Right lobe of liver (tissue), 6 donors: ENCODE measurements at regions of chr19 and their contacts with region 1.

Region 1: GRCh38 chr19:18000935-18001778 is 6.8 kb upstream of the ARRDC2 start:
- DNase-seq: peak; percentile 79 to 93 (median 90)
- ATAC-seq: peak; percentile 71 to 82 (median 78)
- H3K4me3 ChIP-seq: peak overlapping the region; percentile 55 to 79 (median 55)
- H3K27ac ChIP-seq: peak overlapping the region; percentile 69 to 93 (median 84)
- H3K4me1 ChIP-seq: peaks cover 0 to 5% (median 1%) of the 10 kb centered on the region in 4 donors
- H3K27me3 ChIP-seq: no peaks in the 10 kb centered on the region
- CTCF ChIP-seq: no peak
- POLR2A ChIP-seq: peak; percentile 82

Region 2: DNA sequence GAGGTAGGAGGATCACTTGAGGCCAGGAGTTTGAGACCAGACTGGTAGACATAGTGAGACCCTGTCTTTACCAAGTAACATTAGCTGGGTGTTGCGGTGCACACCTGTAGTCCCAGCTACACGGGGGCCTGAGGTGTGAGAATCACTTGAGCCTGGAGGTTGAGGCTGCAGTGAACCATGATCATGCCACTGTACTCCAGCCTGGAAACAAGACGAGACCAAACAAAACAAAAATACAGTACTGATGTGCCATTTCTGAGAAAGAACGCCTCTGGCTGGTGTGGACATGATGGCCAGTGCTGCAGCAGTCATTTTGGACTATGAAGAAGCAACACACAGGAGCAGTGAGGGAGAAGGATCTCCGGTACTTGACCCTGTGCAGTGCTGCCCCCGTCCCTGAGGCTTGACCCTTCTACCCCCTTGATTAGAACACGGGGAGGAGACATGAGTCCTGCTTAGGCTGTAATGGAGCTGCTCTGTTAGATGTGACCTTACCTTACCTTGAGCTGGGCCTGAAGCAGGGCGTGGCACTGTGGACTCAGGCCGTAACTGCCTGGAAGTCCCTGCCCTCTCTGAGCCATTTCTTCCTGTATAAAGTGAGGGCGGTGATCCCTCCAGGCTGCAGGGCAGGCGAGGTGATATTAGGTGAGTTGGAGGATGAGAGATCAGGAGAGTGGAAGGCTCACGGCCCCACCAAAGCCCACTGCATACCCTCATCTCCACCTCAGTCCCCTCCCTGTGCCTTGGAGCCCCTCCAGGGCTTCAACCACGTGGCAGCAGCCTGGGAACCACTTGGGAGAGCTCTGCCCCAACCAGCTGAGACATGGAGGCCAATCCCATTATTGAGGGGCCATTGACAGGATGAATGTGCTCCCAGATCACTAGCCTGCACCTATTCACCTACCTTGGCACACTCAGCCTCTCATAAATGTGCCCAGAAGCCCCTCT is 135.5 kb before region 1 on chr19:
- intact Hi-C with region 1: loop called in 1 of 2 experiments (anchors 5 kb)
- DNase-seq: no peak
- ATAC-seq: peak; percentile 25 to 67 (median 26)
- H3K4me3 ChIP-seq: no peak overlapping the region
- H3K27ac ChIP-seq: no peak overlapping the region
- H3K4me1 ChIP-seq: peaks cover 0 to 12% (median 5%) of the 10 kb centered on the region in 4 donors
- H3K27me3 ChIP-seq: peaks cover 0 to 3% of the 10 kb centered on the region in 2 donors
- CTCF ChIP-seq: no peak
- POLR2A ChIP-seq: no peak

Region 3: GRCh38 chr19:17883627-17884410 is 117.3 kb before region 1 on chr19:
- intact Hi-C with region 1: no loop called
- DNase-seq: no peak
- ATAC-seq: peak in 1 of 4 donors; percentile 39
- H3K4me3 ChIP-seq: no peak overlapping the region
- H3K27ac ChIP-seq: no peak overlapping the region
- H3K4me1 ChIP-seq: no peaks in the 10 kb centered on the region
- H3K27me3 ChIP-seq: no peaks in the 10 kb centered on the region
- CTCF ChIP-seq: no peak
- POLR2A ChIP-seq: no peak

Region 4: DNA sequence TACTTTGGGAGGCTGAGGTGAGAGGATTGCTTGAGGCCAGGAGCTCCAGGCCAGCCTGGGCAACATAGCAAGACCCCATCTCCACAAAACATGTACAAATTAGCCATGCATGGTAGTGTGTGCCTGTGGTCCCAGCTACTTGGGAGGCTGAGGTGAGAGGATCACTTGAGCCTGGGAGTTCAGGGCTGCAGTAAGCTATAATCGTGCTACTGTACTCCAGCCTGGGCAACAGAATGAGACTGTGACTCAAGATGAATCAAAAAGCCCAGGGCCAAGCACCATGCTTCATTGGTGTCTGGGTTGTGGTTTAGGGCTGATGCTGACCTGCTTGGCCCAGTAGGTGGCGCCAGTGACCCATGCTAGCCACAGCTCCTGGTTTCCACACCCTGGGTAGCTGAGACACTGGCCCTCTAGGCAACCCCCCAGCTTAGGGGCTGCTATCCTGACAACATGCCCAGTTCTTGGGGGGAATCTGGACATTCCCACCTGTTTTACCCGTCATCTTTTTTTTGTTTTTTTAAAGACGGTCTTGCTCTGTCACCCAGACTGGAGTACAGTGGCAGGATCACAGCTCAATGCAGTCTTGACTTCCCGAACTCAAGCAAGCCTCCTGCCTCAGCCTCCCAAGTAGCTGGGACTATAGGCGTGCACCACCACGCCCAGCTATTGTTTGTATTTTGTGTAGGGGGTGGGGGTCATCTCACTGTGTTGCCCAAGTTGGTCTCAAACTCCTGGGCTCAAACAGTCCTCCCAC is 62.9 kb before region 1 on chr19:
- intact Hi-C with region 1: loop called in 1 of 2 experiments (anchors 2 kb)
- DNase-seq: peak; percentile 70 to 78 (median 77)
- ATAC-seq: peak; percentile 89 to 97 (median 90)
- H3K4me3 ChIP-seq: no peak overlapping the region
- H3K27ac ChIP-seq: no peak overlapping the region
- H3K4me1 ChIP-seq: peaks cover 0 to 8% (median 3%) of the 10 kb centered on the region in 4 donors
- H3K27me3 ChIP-seq: no peaks in the 10 kb centered on the region
- CTCF ChIP-seq: peak; percentile 87 to 95 (median 92)
- POLR2A ChIP-seq: no peak

Region 5: GRCh38 chr19:18063463-18063862 is 62.3 kb after region 1 on chr19:
- intact Hi-C with region 1: loop called (anchors 2 to 5 kb)
- DNase-seq: peak in 2 of 3 donors; percentile 40 to 67
- ATAC-seq: peak in 3 of 4 donors; percentile 56 to 73 (median 62)
- H3K4me3 ChIP-seq: no peak overlapping the region
- H3K27ac ChIP-seq: no peak overlapping the region
- H3K4me1 ChIP-seq: peaks cover 0 to 2% (median 0%) of the 10 kb centered on the region in 4 donors
- H3K27me3 ChIP-seq: no peaks in the 10 kb centered on the region
- CTCF ChIP-seq: peak in 2 of 4 donors; percentile 26 to 41
- POLR2A ChIP-seq: no peak

Region 6: GRCh38 chr19:18291590-18292461 is 290.7 kb after region 1 on chr19:
- intact Hi-C with region 1: no loop called
- DNase-seq: peak; percentile 86 to 91 (median 89)
- ATAC-seq: peak; percentile 67 to 79 (median 74)
- H3K4me3 ChIP-seq: peak overlapping the region; percentile 56 to 63 (median 60)
- H3K27ac ChIP-seq: peak overlapping the region; percentile 97 to 99 (median 97)
- H3K4me1 ChIP-seq: peaks cover 0 to 13% (median 0%) of the 10 kb centered on the region in 4 donors
- H3K27me3 ChIP-seq: no peaks in the 10 kb centered on the region
- CTCF ChIP-seq: no peak
- POLR2A ChIP-seq: peak; percentile 64